ENCODE measurements at regions of chr5 and their contacts with region 1.

Region 1: DNA sequence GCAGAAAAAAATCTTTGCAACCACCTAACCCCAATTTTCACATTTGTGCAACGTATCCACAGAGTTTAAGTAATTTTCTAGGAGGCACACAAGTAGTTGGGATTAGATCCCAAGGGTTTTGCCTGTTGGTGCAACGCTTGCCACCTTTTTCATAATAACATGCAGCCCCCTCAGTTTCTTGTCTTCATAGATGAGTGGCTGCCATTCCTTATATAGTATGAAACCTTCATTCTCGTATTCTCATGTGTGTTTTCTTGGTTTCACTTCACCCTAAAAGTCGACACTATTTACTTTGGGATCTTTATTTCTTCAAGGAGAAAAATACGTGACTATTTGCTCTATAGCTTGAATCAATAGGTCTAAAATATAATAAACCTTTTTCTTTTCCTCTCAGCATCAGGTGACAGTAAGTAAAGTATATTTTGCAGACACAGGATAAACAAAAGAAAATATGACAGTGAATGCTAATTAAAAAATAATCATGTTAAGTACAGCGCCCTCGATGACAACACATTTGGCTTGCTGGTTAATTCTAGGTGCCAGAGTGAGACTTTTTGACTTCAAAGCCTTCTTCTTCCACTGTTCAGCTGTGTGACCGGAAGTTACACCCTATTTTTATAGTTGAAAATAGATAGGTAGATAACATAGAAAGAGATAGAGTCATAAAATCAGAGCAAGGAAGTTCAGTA is 342.8 kb upstream of the CCNG1 start:
- DNase-seq: peak; percentile 53
- ATAC-seq: peak; percentile 94
- H3K4me3 ChIP-seq: peak overlapping the region; percentile 9; the same call in 1 of the 2 replicates
- H3K27ac ChIP-seq: peak overlapping the region; percentile 90
- H3K4me1 ChIP-seq: peaks cover 10% of the 10 kb centered on the region
- H3K27me3 ChIP-seq: no peaks in the 10 kb centered on the region
- CTCF ChIP-seq: no peak
- EP300 ChIP-seq: peak; percentile 38 to 60; a peak in 3 of 4 replicates
- POLR2A ChIP-seq: no peak
- RAD21 ChIP-seq: no peak

Region 2: DNA sequence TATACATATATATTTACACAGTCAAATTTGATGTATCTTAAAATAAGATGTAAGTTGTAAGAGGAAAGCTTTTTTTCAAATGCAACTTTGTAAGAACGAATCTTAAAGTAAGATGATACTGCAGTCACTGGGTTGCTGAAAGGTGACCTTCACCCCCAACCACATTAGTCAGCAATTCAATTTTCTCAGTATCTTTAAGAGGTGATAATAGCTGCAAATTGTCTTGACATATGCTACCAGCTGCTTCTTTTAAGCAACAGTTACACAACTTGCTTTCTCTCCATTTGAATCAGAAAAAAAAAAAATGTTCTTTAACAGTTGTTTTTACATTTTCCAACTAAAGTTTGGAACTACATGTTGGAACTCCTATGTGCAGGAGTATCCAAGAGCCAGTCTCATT is 96.1 kb after region 1 on chr5:
- CTCF ChIA-PET with region 1: interaction called, 3 read pairs
- POLR2A ChIA-PET with region 1: interaction called, 3 read pairs
- RAD21 ChIA-PET with region 1: interaction called, 7 read pairs
- SMC1A ChIA-PET with region 1: interaction called, 11 read pairs
- in situ Hi-C with region 1: no loop called
- intact Hi-C with region 1: no loop called
- DNase-seq: peak; percentile 3
- ATAC-seq: peak; percentile 77
- H3K4me3 ChIP-seq: no peak overlapping the region
- H3K27ac ChIP-seq: no peak overlapping the region
- H3K4me1 ChIP-seq: no peaks in the 10 kb centered on the region
- H3K27me3 ChIP-seq: no peaks in the 10 kb centered on the region
- CTCF ChIP-seq: no peak
- EP300 ChIP-seq: peak in 1 of 2 experiments; percentile 18; a peak in 1 of 4 replicates
- POLR2A ChIP-seq: no peak
- RAD21 ChIP-seq: no peak

Region 3: GRCh38 chr5:163437309-163438182 is 342.9 kb after region 1 on chr5 and contains the start of gene CCNG1:
- CTCF ChIA-PET with region 1: no interaction called
- POLR2A ChIA-PET with region 1: no interaction called
- RAD21 ChIA-PET with region 1: no interaction called
- SMC1A ChIA-PET with region 1: interaction called, 3 read pairs
- in situ Hi-C with region 1: loop called (anchors 5 kb)
- intact Hi-C with region 1: no loop called
- DNase-seq: peak; percentile 88
- ATAC-seq: peak; percentile 95
- H3K4me3 ChIP-seq: peak within 1 kb of the TSS; percentile 93
- H3K27ac ChIP-seq: peak within 1 kb of the TSS; percentile 86
- H3K4me1 ChIP-seq: no peaks in the 10 kb centered on the region; the same call in 1 of the 2 replicates
- H3K27me3 ChIP-seq: no peaks in the 10 kb centered on the region
- CTCF ChIP-seq: no peak
- EP300 ChIP-seq: no peak
- POLR2A ChIP-seq: peak; percentile 100
- RAD21 ChIP-seq: no peak
- polyA plus RNA-seq, gene CCNG1: 200 to 274 TPM